Gastrocnemius medialis (tissue), 4 donors: ENCODE measurements at regions of chr3 and their contacts with region 1.

Region 1: GRCh38 chr3:39189959-39190269 is 2.5 kb downstream of the XIRP1 start:
- DNase-seq: peak; percentile 76 to 87
- ATAC-seq: peak; percentile 52 to 53
- H3K4me3 ChIP-seq: peak overlapping the region in 2 of 4 donors; percentile 48 to 71
- H3K27ac ChIP-seq: peak overlapping the region; percentile 91 to 100 (median 98)
- H3K4me1 ChIP-seq: peaks cover 53 to 74% of the 10 kb centered on the region in 2 donors
- H3K27me3 ChIP-seq: no peaks in the 10 kb centered on the region
- CTCF ChIP-seq: peak; percentile 63 to 84 (median 82)
- POLR2A ChIP-seq: peak; percentile 20 to 41

Region 2: DNA sequence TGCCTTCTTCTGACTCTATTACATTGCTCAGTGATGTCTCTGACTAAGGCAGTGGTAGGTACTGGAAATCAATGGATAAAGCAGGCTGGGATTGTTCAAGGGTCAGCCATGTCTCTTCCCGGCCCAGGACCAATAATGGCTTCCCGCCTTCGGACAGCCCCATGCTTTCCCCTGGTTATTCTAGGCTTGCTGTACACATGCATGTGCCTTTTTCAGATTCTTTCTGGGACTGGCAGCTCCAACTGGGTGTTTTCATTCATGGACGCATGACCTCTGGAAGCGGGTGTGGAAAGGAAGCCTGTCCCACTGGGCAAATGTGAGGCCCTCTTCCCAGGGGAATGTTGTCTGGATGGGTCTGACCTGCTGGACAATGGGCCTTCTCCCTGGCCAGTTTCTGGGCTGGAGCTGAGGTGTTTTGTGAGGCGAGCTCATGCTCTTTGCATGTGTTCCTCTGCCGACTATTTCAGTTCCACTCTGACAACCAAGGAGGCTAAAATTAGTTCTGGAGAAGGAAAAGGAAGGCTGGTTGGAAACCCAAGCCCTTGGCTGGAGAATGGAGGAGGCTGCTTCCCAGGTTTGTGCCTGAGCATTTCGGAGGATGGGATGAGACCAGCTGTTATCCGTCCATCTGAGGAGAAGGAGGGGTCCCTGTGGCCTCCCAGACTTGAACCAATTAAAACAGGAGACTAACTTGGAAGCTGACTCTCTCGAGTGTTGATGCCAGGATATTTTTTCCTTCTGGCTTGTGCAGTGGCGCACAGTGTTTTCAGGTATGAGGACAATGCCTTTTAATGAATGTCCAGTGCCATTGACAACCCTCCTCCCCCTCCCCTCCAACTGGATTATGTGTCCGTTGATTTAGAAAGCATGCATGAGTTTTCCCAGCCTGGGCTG is 729.3 kb before region 1 on chr3:
- in situ Hi-C with region 1: no loop called
- intact Hi-C with region 1: loop called (anchors 5 kb)
- DNase-seq: peak; percentile 84 to 94
- ATAC-seq: peak; percentile 84 to 85
- H3K4me3 ChIP-seq: peak overlapping the region; percentile 45 to 65 (median 56)
- H3K27ac ChIP-seq: peak overlapping the region; percentile 96 to 98 (median 97)
- H3K4me1 ChIP-seq: peaks cover 55 to 86% of the 10 kb centered on the region in 2 donors
- H3K27me3 ChIP-seq: no peaks in the 10 kb centered on the region
- CTCF ChIP-seq: no peak
- POLR2A ChIP-seq: peak; percentile 37 to 73

Region 3: GRCh38 chr3:39107388-39108199 is 82.3 kb before region 1 on chr3 and contains the starts of genes GORASP1 and TTC21A:
- in situ Hi-C with region 1: no loop called
- intact Hi-C with region 1: loop called (anchors 5 kb)
- DNase-seq: peak; percentile 87 to 88
- ATAC-seq: peak; percentile 95
- H3K4me3 ChIP-seq: peak within 1 kb of the TSS; percentile 71 to 95 (median 84)
- H3K27ac ChIP-seq: peak within 1 kb of the TSS; percentile 89 to 99 (median 94)
- H3K4me1 ChIP-seq: peaks cover 37 to 40% of the 10 kb centered on the region in 2 donors
- H3K27me3 ChIP-seq: no peaks in the 10 kb centered on the region
- CTCF ChIP-seq: peak in 1 of 5 experiments; percentile 27
- POLR2A ChIP-seq: peak; percentile 86 to 89
- total RNA-seq, gene GORASP1: 34.3 to 81.9 (median 38.5) TPM
- total RNA-seq, gene TTC21A: 0.33 to 4.3 (median 1.1) TPM

Region 4: DNA sequence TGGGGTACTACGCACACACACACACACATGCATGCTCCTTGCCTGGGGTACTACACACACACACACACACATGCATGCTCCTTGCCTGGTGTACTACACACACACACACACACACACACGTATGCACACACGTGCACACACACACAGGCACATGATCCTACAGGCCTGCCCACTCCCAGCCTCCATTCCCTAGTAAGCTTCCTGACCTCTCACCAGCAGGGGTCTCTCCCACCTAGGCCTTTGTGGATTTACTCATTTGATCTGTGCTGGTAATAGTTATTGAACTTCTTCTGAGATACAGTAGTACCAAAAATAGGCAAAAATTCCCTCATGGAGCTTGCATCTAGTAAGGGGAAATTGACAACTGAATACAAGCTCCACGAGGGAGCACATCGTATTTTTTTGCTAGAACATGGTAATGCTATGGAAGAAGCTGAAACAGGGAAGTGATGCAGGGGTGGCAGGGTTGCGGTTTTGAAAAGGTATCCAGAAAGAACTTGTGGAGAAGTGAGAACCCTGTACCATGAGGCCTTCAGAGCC is 63.3 kb before region 1 on chr3:
- in situ Hi-C with region 1: no loop called
- intact Hi-C with region 1: loop called (anchors 2 kb)
- DNase-seq: no peak
- ATAC-seq: peak; percentile 63 to 77
- H3K4me3 ChIP-seq: no peak overlapping the region
- H3K27ac ChIP-seq: no peak overlapping the region
- H3K4me1 ChIP-seq: no peaks in the 10 kb centered on the region
- H3K27me3 ChIP-seq: no peaks in the 10 kb centered on the region
- CTCF ChIP-seq: peak; percentile 55 to 75 (median 64)
- POLR2A ChIP-seq: no peak

Region 5: GRCh38 chr3:39637807-39638206 is 447.9 kb after region 1 on chr3:
- in situ Hi-C with region 1: no loop called
- intact Hi-C with region 1: no loop called
- DNase-seq: no peak
- ATAC-seq: no peak
- H3K4me3 ChIP-seq: no peak overlapping the region
- H3K27ac ChIP-seq: no peak overlapping the region
- H3K4me1 ChIP-seq: no peaks in the 10 kb centered on the region
- H3K27me3 ChIP-seq: no peaks in the 10 kb centered on the region
- CTCF ChIP-seq: no peak
- POLR2A ChIP-seq: no peak